Right ventricle myocardium inferior (tissue), 1 donor: ENCODE measurements at regions of chr19 and their contacts with region 1.

Region 1: DNA sequence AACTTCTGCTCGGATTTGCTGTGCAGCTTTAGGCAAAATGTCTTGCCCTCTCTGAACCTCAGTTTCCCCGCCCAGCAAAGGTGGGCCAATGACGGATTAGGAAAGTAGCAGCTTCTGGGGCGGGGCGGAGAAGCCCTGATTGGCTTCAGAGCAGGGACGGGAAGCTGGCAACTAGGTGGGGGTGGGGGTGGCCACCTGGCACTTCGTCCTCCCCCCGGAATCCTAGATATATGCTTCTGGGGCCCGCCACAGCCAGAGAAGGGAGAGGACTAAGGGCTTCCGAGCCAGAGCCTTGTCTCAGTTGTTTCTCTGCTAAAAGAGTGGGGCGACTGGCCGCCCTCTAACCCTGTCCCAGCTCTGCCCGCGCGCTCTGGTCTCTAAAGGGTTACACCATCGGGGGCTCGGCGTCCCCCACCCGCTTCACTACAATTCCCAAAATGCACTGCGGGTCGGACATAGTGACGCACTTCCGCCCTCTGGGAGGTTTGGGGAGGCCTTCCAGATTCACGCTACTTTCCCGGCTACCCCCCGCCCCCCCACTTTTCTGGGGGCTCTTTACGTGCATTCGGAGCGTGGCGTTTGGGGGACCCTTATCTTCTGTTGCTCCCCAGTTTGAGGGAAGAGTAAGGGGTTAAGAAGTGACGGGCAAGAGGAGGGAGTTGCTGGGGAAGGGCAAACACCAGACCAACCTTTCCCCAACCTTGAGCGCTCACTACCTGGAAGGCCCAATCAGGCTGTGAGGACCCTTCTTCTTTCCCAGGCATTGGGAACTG is 672 bp upstream of the IRF2BP1 start:
- DNase-seq: peak; percentile 95
- ATAC-seq: peak; percentile 92

Region 2: GRCh38 chr19:45817010-45817724 is 69.4 kb before region 1 on chr19:
- intact Hi-C with region 1: loop called (anchors 5 kb)
- DNase-seq: peak; percentile 97
- ATAC-seq: peak; percentile 88

Region 3: GRCh38 chr19:45862564-45863334 is 23.9 kb before region 1 on chr19 and contains the start of gene SYMPK:
- intact Hi-C with region 1: loop called (anchors 2 kb)
- DNase-seq: peak; percentile 99
- ATAC-seq: peak; percentile 100
- total RNA-seq, gene SYMPK: 29.9 TPM

Region 4: DNA sequence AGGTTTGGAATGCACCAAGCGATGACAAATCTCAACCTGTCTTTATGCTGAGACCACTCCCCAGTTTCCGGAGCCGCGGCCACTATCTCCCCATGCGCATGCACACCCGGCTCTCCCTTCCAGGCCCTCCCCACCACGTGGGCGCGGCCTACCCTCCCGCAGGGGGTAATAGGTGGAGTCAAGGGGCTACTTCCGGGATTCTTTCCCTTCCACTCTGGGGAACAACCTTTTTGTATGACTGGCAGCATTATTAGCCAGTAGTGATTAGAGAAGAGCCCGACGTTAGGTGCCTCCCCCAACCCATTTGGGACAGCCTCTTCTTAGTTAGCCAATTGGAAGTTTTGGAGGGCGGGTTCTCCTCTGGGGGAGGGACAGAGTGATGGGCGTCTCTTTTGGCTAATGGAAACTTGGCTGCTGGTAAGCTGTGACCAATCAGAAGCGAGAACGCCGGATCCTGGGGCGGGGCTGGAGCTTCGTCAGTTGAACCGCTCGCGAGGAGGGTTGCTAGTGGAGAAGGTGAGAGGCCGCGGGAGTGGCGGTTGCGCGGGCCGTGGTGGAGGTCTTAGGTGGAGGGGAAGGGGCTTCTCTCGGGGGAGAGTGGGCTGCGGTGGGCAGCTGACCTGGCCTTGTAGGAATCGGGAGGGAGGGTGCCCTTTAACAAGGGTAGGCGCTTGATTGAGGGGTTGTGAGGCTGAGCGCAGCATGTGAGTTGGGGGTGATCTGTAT is 108.5 kb after region 1 on chr19 and contains the start of gene CCDC61:
- intact Hi-C with region 1: loop called (anchors 1 kb)
- DNase-seq: peak; percentile 97
- ATAC-seq: peak; percentile 99
- total RNA-seq, gene CCDC61: 8.2 TPM